ENCODE measurements at regions of chr9 and their contacts with region 1.

Region 1: GRCh38 chr9:98255578-98256296 is at the start of gene TBC1D2:
- DNase-seq: peak; percentile 98
- ATAC-seq: peak; percentile 89
- H3K4me3 ChIP-seq: peak within 1 kb of the TSS; percentile 89 to 98 (median 93)
- H3K4me3 Mint-ChIP-seq: peak within 1 kb of the TSS; percentile 98
- H3K27ac ChIP-seq: peak within 1 kb of the TSS; percentile 83 to 92
- H3K27ac Mint-ChIP-seq: peak within 1 kb of the TSS; percentile 100
- H3K4me1 ChIP-seq: peaks cover 11 to 21% of the 10 kb centered on the region in 2 donors
- H3K4me1 Mint-ChIP-seq: peaks cover 15% of the 10 kb centered on the region
- H3K27me3 ChIP-seq: no peaks in the 10 kb centered on the region
- H3K27me3 Mint-ChIP-seq: no peaks in the 10 kb centered on the region
- CTCF ChIP-seq: peak; percentile 14
- total RNA-seq, gene TBC1D2: 4.3 and 5.0 TPM in 2 replicates

Region 2: GRCh38 chr9:97803167-97804058 is 452.3 kb before region 1 on chr9:
- CTCF ChIA-PET with region 1: no interaction called
- POLR2A ChIA-PET with region 1: no interaction called
- intact Hi-C with region 1: loop called (anchors 2 kb)
- DNase-seq: peak; percentile 84
- ATAC-seq: peak; percentile 94
- H3K4me3 ChIP-seq: peak overlapping the region in 4 of 5 experiments; percentile 36 to 64 (median 56)
- H3K4me3 Mint-ChIP-seq: peak overlapping the region; percentile 87
- H3K27ac ChIP-seq: no peak overlapping the region
- H3K27ac Mint-ChIP-seq: peak overlapping the region; percentile 20
- H3K4me1 ChIP-seq: peaks cover 7 to 9% of the 10 kb centered on the region in 2 donors
- H3K4me1 Mint-ChIP-seq: peaks cover 10% of the 10 kb centered on the region
- H3K27me3 ChIP-seq: peaks cover 0 to 20% (median 7%) of the 10 kb centered on the region in 4 experiments
- H3K27me3 Mint-ChIP-seq: peaks cover 30% of the 10 kb centered on the region
- CTCF ChIP-seq: peak; percentile 16

Region 3: GRCh38 chr9:98056269-98057137 is 199.2 kb before region 1 on chr9 and contains the start of gene NANS:
- CTCF ChIA-PET with region 1: interaction called, 7 read pairs
- POLR2A ChIA-PET with region 1: interaction called, 12 read pairs
- intact Hi-C with region 1: loop called (anchors 1 kb)
- DNase-seq: peak; percentile 92
- ATAC-seq: peak; percentile 97
- H3K4me3 ChIP-seq: peak within 1 kb of the TSS; percentile 76 to 85 (median 81)
- H3K4me3 Mint-ChIP-seq: peak within 1 kb of the TSS; percentile 99
- H3K27ac ChIP-seq: peak within 1 kb of the TSS; percentile 80 to 89
- H3K27ac Mint-ChIP-seq: peak within 1 kb of the TSS; percentile 95
- H3K4me1 ChIP-seq: peaks cover 8 to 18% of the 10 kb centered on the region in 2 donors
- H3K4me1 Mint-ChIP-seq: peaks cover 17% of the 10 kb centered on the region
- H3K27me3 ChIP-seq: no peaks in the 10 kb centered on the region
- H3K27me3 Mint-ChIP-seq: no peaks in the 10 kb centered on the region
- CTCF ChIP-seq: no peak
- total RNA-seq, gene NANS: 14.9 and 15.3 TPM in 2 replicates

Region 4: DNA sequence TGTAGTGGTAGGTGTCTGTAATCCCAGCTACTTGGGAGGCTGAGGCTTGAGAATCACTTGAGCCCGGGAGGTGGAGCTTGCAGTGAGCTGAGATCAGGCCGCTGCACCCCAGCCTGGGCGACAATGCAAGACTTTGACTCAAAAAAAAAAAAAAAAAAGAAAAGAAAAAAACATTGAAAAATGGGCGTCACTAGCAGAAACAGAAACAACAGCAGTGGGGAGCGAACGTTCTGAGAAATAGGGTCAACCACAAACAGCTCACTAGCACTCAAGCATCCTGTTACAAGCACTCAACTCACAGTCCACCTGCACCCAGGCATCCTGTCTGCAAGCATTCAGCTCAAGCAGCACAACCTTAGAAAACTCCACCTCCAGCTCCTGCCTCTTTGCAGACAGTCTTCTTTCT is 153.9 kb before region 1 on chr9:
- CTCF ChIA-PET with region 1: interaction called, 9 read pairs
- POLR2A ChIA-PET with region 1: interaction called, 13 read pairs
- intact Hi-C with region 1: no loop called
- DNase-seq: peak; percentile 91
- ATAC-seq: peak; percentile 98
- H3K4me3 ChIP-seq: peak overlapping the region in 1 of 5 experiments; percentile 38
- H3K4me3 Mint-ChIP-seq: peak overlapping the region; percentile 68
- H3K27ac ChIP-seq: peak overlapping the region; percentile 66 to 74
- H3K27ac Mint-ChIP-seq: peak overlapping the region; percentile 81
- H3K4me1 ChIP-seq: peaks cover 82 to 87% of the 10 kb centered on the region in 2 donors
- H3K4me1 Mint-ChIP-seq: peaks cover 77% of the 10 kb centered on the region
- H3K27me3 ChIP-seq: no peaks in the 10 kb centered on the region
- H3K27me3 Mint-ChIP-seq: no peaks in the 10 kb centered on the region
- CTCF ChIP-seq: no peak

Region 5: DNA sequence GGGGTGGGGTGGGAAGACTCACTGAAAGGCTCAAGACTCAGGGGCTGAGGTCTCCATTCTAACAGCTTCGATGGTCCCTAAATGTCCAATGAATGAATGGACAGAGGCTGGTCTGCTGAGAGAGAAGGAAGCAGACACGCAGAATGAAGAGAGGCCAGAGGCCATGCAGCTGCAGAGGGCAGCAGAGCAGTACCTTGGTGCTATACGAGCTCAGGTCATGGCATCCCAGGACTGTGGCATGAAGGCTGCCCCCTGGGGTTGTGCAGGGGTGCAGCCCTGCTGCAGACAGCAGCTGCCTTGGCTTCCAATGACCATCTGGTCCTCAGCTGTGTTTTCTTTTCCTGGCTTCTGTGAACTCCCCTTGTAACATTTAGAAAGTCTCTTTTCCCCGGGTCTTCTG is 48.1 kb before region 1 on chr9:
- CTCF ChIA-PET with region 1: interaction called, 13 read pairs
- POLR2A ChIA-PET with region 1: interaction called, 3 read pairs
- intact Hi-C with region 1: no loop called
- DNase-seq: no peak
- ATAC-seq: no peak
- H3K4me3 ChIP-seq: no peak overlapping the region
- H3K4me3 Mint-ChIP-seq: no peak overlapping the region
- H3K27ac ChIP-seq: no peak overlapping the region
- H3K27ac Mint-ChIP-seq: no peak overlapping the region
- H3K4me1 ChIP-seq: peaks cover 4 to 10% of the 10 kb centered on the region in 2 donors
- H3K4me1 Mint-ChIP-seq: peaks cover 5% of the 10 kb centered on the region
- H3K27me3 ChIP-seq: no peaks in the 10 kb centered on the region
- H3K27me3 Mint-ChIP-seq: no peaks in the 10 kb centered on the region
- CTCF ChIP-seq: no peak

Region 6: GRCh38 chr9:99173570-99174504 is 918.1 kb after region 1 on chr9:
- CTCF ChIA-PET with region 1: no interaction called
- POLR2A ChIA-PET with region 1: no interaction called
- intact Hi-C with region 1: no loop called
- DNase-seq: no peak
- ATAC-seq: no peak
- H3K4me3 ChIP-seq: no peak overlapping the region
- H3K4me3 Mint-ChIP-seq: no peak overlapping the region
- H3K27ac ChIP-seq: no peak overlapping the region
- H3K27ac Mint-ChIP-seq: no peak overlapping the region
- H3K4me1 ChIP-seq: peaks cover 3 to 7% of the 10 kb centered on the region in 2 donors
- H3K4me1 Mint-ChIP-seq: peaks cover 29% of the 10 kb centered on the region
- H3K27me3 ChIP-seq: no peaks in the 10 kb centered on the region
- H3K27me3 Mint-ChIP-seq: no peaks in the 10 kb centered on the region
- CTCF ChIP-seq: no peak

Measured in B cell (primary cell).